Posterior vena cava (tissue), 2 donors: ENCODE measurements at regions of chr11 and their contacts with region 1.

Region 1: GRCh38 chr11:61756452-61757212 is 4.2 kb downstream of the MYRF start:
- DNase-seq: no peak

Region 2: DNA sequence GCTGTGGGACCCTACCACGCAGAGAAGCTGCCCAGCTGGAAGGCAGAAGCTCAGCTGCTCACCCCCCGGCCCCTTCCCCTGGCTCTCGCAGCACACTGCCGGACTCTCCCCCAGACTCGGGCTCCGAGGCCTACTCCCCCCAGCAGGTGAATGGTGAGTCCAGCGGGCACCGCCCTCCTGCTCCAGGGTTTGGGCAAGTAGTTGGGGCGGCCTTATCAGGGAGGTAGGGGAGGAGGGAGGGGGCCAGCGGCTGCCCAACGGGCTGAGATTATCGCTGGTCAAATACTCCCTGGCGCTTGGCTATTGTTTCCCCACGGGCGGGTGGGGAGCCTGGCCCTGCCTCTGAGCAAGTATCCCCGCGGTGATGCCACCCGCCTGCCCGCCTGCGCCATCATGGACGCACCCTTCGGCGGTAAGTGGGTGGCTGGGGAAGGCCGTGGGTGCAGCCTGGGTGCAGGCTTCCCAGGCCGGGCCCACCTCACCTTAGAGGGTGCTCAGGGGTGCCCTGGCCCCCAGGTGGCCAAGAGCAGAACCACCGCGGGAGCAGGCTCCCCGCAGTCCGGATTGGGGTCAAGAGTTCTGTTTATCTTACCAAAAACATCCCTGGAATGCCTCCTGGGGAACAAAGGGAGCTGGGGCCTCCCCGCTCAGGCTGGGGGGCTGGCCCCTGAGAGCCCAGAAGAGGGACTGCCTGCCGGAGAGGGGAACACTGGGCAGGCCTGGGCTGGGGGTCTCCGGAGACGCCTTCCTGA is 12.7 kb after region 1 on chr11:
- intact Hi-C with region 1: no loop called
- DNase-seq: no peak

Region 3: DNA sequence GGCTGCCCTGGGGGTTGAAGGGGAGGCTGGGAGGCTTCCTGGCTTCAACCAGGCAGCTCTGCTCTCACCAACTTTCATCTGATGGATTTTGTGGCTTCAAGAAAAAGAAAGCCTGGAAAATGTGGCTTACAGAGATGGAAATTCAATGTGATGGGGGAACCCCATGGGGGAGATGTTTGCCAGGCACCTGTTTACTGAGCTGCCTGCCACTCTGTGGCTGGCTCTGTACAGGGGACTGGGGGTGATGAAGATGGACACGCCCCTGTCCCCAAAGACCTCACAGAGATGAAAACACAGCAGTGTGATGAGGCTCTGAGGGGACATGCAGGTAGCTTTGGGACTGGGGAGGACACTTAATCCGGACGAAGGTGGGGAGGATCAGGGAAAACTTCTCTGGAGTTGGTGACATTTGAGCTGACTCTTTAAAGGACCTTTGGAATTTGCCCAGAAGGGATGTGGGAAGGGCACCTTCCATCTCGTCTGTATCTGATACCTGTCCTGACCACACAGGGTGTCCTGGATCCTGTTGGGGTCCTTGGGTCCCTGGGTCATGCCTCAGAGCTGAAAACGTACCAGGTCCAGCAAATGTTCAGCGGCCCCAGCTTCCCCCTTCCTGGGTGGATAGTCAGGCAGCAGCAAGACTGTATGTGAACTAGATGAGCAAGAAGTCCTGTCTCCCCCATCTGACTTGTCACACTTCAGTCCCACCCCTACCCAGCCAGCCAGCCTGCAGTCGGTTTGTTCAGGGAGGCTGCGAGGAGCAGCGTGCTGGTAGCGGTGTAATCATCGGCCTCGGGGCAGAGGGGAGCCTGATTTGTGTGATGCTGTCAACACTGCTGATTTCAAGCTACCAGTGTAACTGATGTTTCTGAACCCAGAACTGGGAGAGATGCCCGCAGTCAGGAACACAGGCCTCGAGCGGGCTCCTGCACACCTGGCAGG is 25.9 kb after region 1 on chr11:
- intact Hi-C with region 1: loop called in 1 of 2 experiments (anchors 1 kb)
- DNase-seq: no peak